Cardiac septum (tissue), 1 donor: ENCODE measurements at regions of chr12 and their contacts with region 1.

Region 1: DNA sequence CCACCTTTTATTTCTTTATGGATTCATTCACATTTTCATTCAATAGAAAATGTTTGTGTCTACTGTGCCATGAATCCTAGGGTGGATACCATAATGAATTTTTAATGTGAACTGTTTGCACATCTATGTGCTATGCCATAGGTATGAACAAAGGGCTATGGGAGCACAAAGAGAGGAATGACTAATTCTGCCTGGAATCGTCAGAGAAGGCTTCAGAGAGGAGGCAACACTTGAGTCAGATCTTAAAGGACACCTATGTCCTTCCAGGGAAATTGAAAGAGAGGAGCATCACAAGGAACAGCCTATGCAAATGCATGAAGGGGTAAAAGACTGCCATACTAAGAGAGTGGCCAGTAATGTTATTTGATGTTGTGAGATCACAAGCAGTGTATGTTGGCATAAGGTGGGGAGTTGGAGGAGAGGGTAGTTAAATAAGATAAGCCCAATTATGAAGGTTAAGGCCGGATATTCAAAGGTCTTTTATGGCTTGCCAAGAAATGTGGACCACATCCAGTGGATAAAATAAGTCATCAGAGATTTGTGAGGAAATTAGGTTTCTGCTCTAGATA is 246.7 kb downstream of the GRIN2B start:
- DNase-seq: no peak

Region 2: GRCh38 chr12:13864081-13864673 is 129.5 kb after region 1 on chr12:
- intact Hi-C with region 1: loop called (anchors 5 kb)
- DNase-seq: peak; percentile 83